Psoas muscle (tissue), 8 donors: ENCODE measurements at regions of chr1 and their contacts with region 1.

Region 1: GRCh38 chr1:212558693-212559480 is 49.7 kb upstream of the ATF3 start:
- DNase-seq: peak; percentile 93 to 95
- ATAC-seq: peak; percentile 91 to 97 (median 94)
- H3K4me3 ChIP-seq: peak overlapping the region; percentile 83
- H3K27ac ChIP-seq: peak overlapping the region; percentile 83
- H3K4me1 ChIP-seq: peaks cover 4% of the 10 kb centered on the region
- H3K27me3 ChIP-seq: peaks cover 0 to 2% (median 0%) of the 10 kb centered on the region in 3 donors
- CTCF ChIP-seq: no peak

Region 2: GRCh38 chr1:212482384-212483281 is 76.3 kb before region 1 on chr1:
- intact Hi-C with region 1: loop called in 1 of 2 experiments (anchors 5 kb)
- DNase-seq: no peak
- ATAC-seq: peak in 2 of 4 donors; percentile 18 to 36
- H3K4me3 ChIP-seq: no peak overlapping the region
- H3K27ac ChIP-seq: no peak overlapping the region
- H3K4me1 ChIP-seq: no peaks in the 10 kb centered on the region
- H3K27me3 ChIP-seq: peaks cover 0 to 2% (median 0%) of the 10 kb centered on the region in 3 donors
- CTCF ChIP-seq: no peak